ENCODE measurements at regions of chr7 and their contacts with region 1.

Region 1: GRCh38 chr7:55255496-55256435 is 109.4 kb upstream of the LANCL2 start:
- DNase-seq: peak; percentile 32
- H3K4me3 ChIP-seq: peak overlapping the region; percentile 70
- H3K27ac ChIP-seq: peak overlapping the region; percentile 47
- H3K27me3 ChIP-seq: peaks cover 3% of the 10 kb centered on the region
- CTCF ChIP-seq: peak; percentile 80

Region 2: GRCh38 chr7:54773472-54774399 is 482.0 kb before region 1 on chr7:
- CTCF ChIA-PET with region 1: interaction called, 360 read pairs
- POLR2A ChIA-PET with region 1: interaction called, 4 read pairs
- DNase-seq: peak; percentile 57
- H3K4me3 ChIP-seq: peak overlapping the region; percentile 28
- H3K27ac ChIP-seq: no peak overlapping the region
- H3K27me3 ChIP-seq: no peaks in the 10 kb centered on the region
- CTCF ChIP-seq: peak; percentile 92

Region 3: GRCh38 chr7:54996391-54996790 is 259.4 kb before region 1 on chr7:
- CTCF ChIA-PET with region 1: interaction called, 11 read pairs
- POLR2A ChIA-PET with region 1: no interaction called
- DNase-seq: no peak
- H3K4me3 ChIP-seq: no peak overlapping the region
- H3K27ac ChIP-seq: no peak overlapping the region
- H3K27me3 ChIP-seq: no peaks in the 10 kb centered on the region
- CTCF ChIP-seq: no peak

Region 4: GRCh38 chr7:55065079-55065478 is 190.7 kb before region 1 on chr7:
- CTCF ChIA-PET with region 1: interaction called, 16 read pairs
- POLR2A ChIA-PET with region 1: interaction called, 3 read pairs
- DNase-seq: peak; percentile 93
- H3K4me3 ChIP-seq: no peak overlapping the region
- H3K27ac ChIP-seq: peak overlapping the region; percentile 98
- H3K27me3 ChIP-seq: no peaks in the 10 kb centered on the region
- CTCF ChIP-seq: no peak

Region 5: GRCh38 chr7:55092186-55092974 is 163.4 kb before region 1 on chr7:
- CTCF ChIA-PET with region 1: interaction called, 10 read pairs
- POLR2A ChIA-PET with region 1: no interaction called
- DNase-seq: no peak
- H3K4me3 ChIP-seq: no peak overlapping the region
- H3K27ac ChIP-seq: no peak overlapping the region
- H3K27me3 ChIP-seq: no peaks in the 10 kb centered on the region
- CTCF ChIP-seq: no peak

Region 6: DNA sequence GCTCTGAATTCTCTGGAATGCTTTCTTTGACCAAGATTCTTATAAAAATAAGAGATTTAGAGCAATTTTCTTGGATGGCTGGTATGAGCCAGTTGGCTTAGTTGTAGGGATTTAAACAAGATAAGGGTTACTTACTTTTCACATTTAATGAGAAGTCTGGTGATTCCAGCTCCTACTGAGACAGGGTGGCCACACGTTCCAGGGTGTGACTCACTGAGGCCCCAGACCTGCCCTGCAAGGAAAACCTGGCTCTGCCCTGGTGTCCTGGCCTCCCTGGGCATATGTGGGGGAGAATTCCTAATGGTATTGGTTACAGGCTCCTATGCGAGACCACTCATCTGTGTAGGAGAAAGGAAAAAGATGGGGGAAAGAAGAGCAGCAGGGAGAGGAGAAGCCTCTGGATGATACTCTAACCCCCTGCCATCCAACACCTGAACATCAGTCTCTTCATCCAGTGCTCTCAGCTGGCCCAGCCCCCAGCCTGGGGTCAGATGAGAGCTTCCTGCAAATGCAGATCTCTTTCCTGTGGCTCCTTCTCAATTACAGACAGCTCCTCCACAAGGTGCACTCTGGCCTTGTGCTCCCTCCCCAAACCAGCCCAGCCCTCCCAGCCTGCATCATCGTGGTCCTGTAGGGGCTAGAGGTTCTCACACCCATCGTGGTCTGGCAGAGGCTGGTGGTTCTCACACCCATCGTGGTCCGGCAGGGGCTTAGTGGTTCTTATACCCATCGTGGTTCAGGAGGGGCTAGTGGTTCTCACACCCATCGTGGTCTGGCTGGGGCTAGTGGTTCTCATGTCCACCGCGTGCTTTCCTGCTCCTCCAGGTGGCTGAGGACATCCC is 97.0 kb before region 1 on chr7:
- CTCF ChIA-PET with region 1: interaction called, 17 read pairs
- POLR2A ChIA-PET with region 1: no interaction called
- DNase-seq: no peak
- H3K4me3 ChIP-seq: no peak overlapping the region
- H3K27ac ChIP-seq: no peak overlapping the region
- H3K27me3 ChIP-seq: no peaks in the 10 kb centered on the region
- CTCF ChIP-seq: no peak

Region 7: DNA sequence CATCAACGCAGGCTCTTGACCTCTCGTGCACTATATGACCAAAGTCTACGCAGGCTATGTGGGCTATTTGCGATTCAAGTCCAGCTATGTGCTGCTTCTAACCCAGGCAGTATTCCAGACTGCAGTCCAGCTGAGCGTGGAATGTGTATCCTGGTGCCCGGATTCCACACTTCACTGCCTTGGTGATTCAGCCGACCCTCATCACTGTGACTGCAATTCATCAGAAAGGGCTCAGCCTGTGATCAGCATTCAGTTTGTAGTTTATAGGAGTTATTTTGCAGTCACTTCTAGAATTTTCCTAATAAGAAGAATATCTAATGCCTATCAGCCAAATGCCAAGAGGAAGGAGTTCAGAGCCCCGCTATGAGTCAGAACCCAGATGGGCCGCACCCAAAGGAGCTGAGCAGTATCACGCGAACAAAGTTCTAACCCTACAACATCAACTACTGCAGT is 10.5 kb before region 1 on chr7:
- CTCF ChIA-PET with region 1: interaction called, 25 read pairs
- POLR2A ChIA-PET with region 1: no interaction called
- DNase-seq: no peak
- H3K4me3 ChIP-seq: no peak overlapping the region
- H3K27ac ChIP-seq: no peak overlapping the region
- H3K27me3 ChIP-seq: no peaks in the 10 kb centered on the region
- CTCF ChIP-seq: no peak

Measured in AG04450 (cell line).